ENCODE measurements at regions of chr10 and their contacts with region 1.

Region 1: DNA sequence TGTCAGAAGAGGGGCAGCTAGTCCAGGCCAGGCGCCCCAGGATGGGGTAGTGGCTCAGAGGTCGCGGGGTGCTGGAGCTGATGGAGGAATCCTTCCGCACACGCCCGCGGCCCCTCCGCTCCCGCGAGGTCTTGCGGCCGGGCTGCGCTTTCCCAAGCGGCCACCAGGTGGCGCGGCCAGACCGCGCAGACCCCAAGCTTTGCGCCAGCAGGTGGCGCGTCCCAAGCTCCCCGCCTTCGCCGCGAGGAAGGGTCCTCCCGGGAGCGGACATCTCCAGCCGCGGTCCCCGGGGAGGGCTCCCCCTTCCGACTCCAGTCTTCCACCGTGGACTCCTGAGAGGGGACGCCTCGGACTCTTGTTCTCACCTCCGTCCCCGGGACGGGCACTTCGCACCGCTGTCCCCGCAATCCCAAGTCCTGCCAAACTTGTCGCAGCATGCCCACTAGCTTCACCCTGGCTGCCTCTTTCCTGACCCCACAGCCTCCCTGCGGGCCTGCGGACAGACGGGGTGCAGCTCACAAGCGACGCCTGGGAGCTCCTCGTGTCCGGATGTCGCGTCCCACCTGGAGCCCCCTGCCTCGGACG is 19.4 kb downstream of the KCNK18 start:
- DNase-seq: no peak
- ATAC-seq: peak; percentile 94
- H3K4me3 ChIP-seq: peak overlapping the region; percentile 52
- H3K27ac ChIP-seq: no peak overlapping the region
- H3K4me1 ChIP-seq: peaks cover 3% of the 10 kb centered on the region; the same call in 1 of the 2 replicates
- H3K27me3 ChIP-seq: no peaks in the 10 kb centered on the region; a peak in 2 of 4 replicates
- CTCF ChIP-seq: peak; percentile 99 to 100 (median 100)
- EP300 ChIP-seq: no peak
- POLR2A ChIP-seq: no peak
- RAD21 ChIP-seq: peak; percentile 90

Region 2: DNA sequence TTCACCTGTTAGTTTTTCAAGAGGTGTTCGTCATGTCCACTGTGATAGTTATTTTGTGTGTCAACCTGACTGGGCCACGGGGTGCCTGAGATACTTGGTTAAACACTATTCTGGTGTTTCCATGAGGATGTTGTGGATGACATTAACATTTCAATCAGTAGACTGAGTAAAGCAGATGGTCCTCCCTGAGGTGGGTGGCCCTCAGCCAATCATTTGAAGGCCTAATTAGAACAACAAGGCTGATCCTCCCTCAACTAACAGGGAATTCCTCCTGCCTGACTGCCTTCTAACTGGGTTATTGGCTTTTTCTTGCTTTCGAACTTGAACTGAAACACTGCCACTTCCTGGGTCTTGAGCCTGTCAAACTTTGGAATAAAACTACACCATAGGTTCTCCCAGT is 291.6 kb before region 1 on chr10:
- CTCF ChIA-PET with region 1: no interaction called
- POLR2A ChIA-PET with region 1: no interaction called
- RAD21 ChIA-PET with region 1: no interaction called
- SMC1A ChIA-PET with region 1: no interaction called
- in situ Hi-C with region 1: no loop called
- intact Hi-C with region 1: no loop called
- DNase-seq: no peak
- ATAC-seq: no peak
- H3K4me3 ChIP-seq: no peak overlapping the region
- H3K27ac ChIP-seq: no peak overlapping the region
- H3K4me1 ChIP-seq: no peaks in the 10 kb centered on the region
- H3K27me3 ChIP-seq: no peaks in the 10 kb centered on the region
- CTCF ChIP-seq: no peak
- EP300 ChIP-seq: no peak
- POLR2A ChIP-seq: no peak
- RAD21 ChIP-seq: no peak

Region 3: DNA sequence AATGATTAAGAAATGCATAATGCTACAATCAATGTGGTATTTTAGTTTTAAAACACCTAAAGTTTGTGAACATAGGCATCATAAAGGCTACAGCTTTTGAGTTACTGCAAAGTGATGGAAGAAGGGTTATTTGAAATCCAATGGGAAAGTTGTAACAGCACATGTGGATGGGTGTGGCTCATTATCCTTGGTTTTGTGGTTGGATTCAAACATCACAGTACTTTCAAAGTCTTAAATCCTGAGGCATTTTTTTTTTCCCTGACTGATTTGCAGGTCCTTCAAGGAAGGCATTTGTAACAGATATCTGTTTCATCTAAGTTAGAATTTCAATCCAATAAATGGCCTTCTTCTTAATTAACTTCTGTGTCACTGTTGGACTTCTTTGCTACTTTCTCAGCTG is 201.9 kb before region 1 on chr10:
- CTCF ChIA-PET with region 1: no interaction called
- POLR2A ChIA-PET with region 1: no interaction called
- RAD21 ChIA-PET with region 1: no interaction called
- SMC1A ChIA-PET with region 1: no interaction called
- in situ Hi-C with region 1: no loop called
- intact Hi-C with region 1: no loop called
- DNase-seq: no peak
- ATAC-seq: no peak
- H3K4me3 ChIP-seq: no peak overlapping the region
- H3K27ac ChIP-seq: no peak overlapping the region
- H3K4me1 ChIP-seq: no peaks in the 10 kb centered on the region
- H3K27me3 ChIP-seq: no peaks in the 10 kb centered on the region
- CTCF ChIP-seq: no peak
- EP300 ChIP-seq: no peak
- POLR2A ChIP-seq: no peak
- RAD21 ChIP-seq: no peak

Region 4: GRCh38 chr10:117370205-117370604 is 153.5 kb after region 1 on chr10:
- CTCF ChIA-PET with region 1: interaction called, 18 read pairs
- POLR2A ChIA-PET with region 1: no interaction called
- RAD21 ChIA-PET with region 1: no interaction called
- SMC1A ChIA-PET with region 1: no interaction called
- in situ Hi-C with region 1: no loop called
- intact Hi-C with region 1: no loop called
- DNase-seq: no peak
- ATAC-seq: no peak
- H3K4me3 ChIP-seq: no peak overlapping the region
- H3K27ac ChIP-seq: no peak overlapping the region
- H3K4me1 ChIP-seq: peaks cover 11% of the 10 kb centered on the region
- H3K27me3 ChIP-seq: no peaks in the 10 kb centered on the region
- CTCF ChIP-seq: no peak
- EP300 ChIP-seq: no peak
- POLR2A ChIP-seq: no peak
- RAD21 ChIP-seq: no peak

Region 5: GRCh38 chr10:117431160-117431559 is 214.5 kb after region 1 on chr10:
- CTCF ChIA-PET with region 1: interaction called, 21 read pairs
- POLR2A ChIA-PET with region 1: no interaction called
- RAD21 ChIA-PET with region 1: interaction called, 9 read pairs
- SMC1A ChIA-PET with region 1: interaction called, 5 read pairs
- in situ Hi-C with region 1: no loop called
- intact Hi-C with region 1: no loop called
- DNase-seq: no peak
- ATAC-seq: peak; percentile 41; the same call in 2 of the 3 replicates
- H3K4me3 ChIP-seq: no peak overlapping the region
- H3K27ac ChIP-seq: no peak overlapping the region
- H3K4me1 ChIP-seq: no peaks in the 10 kb centered on the region
- H3K27me3 ChIP-seq: peaks cover 0 to 2% of the 10 kb centered on the region in 2 experiments; a peak in 2 of 4 replicates
- CTCF ChIP-seq: peak in 1 of 3 experiments; percentile 25; a peak in 1 of 6 replicates
- EP300 ChIP-seq: no peak
- POLR2A ChIP-seq: no peak
- RAD21 ChIP-seq: no peak

Region 6: DNA sequence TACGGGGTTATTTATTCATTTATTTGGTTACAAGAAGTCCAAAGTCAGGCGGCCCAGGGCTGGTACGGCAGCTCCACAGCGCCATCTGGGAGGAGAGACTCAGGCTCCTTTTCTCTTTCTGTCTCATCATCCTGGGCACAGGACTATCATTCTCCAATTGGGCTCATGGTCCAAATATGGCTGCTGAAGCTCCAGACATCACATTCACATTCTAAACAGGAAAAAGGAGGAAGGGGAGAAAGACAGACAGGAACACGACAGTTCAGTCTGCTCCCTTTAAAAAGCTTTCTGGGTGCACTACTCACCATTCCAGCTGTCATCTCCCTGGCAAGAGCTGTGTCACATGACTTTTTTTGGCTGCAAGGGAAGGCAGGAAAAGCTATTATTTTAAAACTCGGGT is 232.9 kb after region 1 on chr10:
- CTCF ChIA-PET with region 1: interaction called, 44 read pairs
- POLR2A ChIA-PET with region 1: no interaction called
- RAD21 ChIA-PET with region 1: interaction called, 8 read pairs
- SMC1A ChIA-PET with region 1: interaction called, 7 read pairs
- in situ Hi-C with region 1: no loop called
- intact Hi-C with region 1: loop called (anchors 5 kb)
- DNase-seq: no peak
- ATAC-seq: no peak
- H3K4me3 ChIP-seq: no peak overlapping the region
- H3K27ac ChIP-seq: no peak overlapping the region
- H3K4me1 ChIP-seq: no peaks in the 10 kb centered on the region
- H3K27me3 ChIP-seq: no peaks in the 10 kb centered on the region
- CTCF ChIP-seq: peak in 2 of 3 experiments; percentile 16 to 30; a peak in 1 of 6 replicates
- EP300 ChIP-seq: no peak
- POLR2A ChIP-seq: no peak
- RAD21 ChIP-seq: 0 out of 2 replicates have a peak, but pooled peaks have one; percentile 6

Region 7: DNA sequence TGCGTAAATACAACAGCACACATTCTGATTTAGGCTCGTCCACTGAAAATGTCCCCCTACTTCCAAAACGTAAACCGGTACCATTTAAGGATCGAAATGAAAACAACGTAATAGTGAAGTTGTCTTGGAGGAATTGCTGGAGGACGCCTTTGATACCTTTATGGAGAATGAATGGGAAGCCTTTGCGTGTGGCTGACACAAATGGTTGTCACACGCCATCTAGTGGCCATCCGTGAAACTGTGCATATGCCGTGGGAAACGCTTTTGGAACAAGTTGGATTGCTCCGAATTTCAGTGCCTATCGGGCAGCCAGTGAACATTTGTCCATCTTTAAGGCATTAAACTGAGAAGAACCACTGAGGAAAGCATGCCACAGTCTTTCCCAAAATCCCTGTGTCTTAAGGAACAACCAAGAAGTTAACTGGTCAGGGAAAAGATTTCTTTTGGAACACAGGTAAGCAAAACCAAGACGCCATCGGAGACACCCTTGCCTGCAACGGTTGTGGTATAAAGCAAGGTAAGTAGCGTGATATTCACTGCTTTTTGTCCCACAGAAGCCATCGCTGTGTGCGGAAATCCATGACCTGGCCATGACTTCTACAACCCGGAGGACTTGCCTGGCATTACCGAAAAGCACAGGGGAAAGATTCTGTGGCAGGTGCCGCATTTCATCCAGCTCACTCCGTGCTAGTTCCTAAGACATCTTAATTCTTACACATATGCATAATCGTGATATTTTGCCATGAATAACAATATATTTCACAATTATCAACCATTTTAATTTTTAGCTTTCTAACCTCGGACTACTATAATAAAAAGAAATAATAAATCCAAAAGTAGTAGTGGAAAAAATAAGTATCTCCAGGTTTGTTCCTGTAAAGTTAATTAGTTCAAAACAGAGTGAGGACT is 1024.8 kb after region 1 on chr10:
- CTCF ChIA-PET with region 1: interaction called, 35 read pairs
- POLR2A ChIA-PET with region 1: no interaction called
- RAD21 ChIA-PET with region 1: interaction called, 5 read pairs
- SMC1A ChIA-PET with region 1: interaction called, 5 read pairs
- in situ Hi-C with region 1: loop called (anchors 10 kb)
- intact Hi-C with region 1: loop called (anchors 5 kb)
- DNase-seq: peak; percentile 16
- ATAC-seq: peak; percentile 63
- H3K4me3 ChIP-seq: no peak overlapping the region
- H3K27ac ChIP-seq: no peak overlapping the region
- H3K4me1 ChIP-seq: no peaks in the 10 kb centered on the region
- H3K27me3 ChIP-seq: peaks cover 0 to 3% of the 10 kb centered on the region in 2 experiments; a peak in 1 of 4 replicates
- CTCF ChIP-seq: peak; percentile 88 to 95 (median 88); a peak in 5 of 6 replicates
- EP300 ChIP-seq: no peak
- POLR2A ChIP-seq: no peak
- RAD21 ChIP-seq: peak; percentile 86

Measured in GM12878 (cell line).